Spleen (tissue), 13 donors: ENCODE measurements at regions of chr6 and their contacts with region 1.

Region 1: DNA sequence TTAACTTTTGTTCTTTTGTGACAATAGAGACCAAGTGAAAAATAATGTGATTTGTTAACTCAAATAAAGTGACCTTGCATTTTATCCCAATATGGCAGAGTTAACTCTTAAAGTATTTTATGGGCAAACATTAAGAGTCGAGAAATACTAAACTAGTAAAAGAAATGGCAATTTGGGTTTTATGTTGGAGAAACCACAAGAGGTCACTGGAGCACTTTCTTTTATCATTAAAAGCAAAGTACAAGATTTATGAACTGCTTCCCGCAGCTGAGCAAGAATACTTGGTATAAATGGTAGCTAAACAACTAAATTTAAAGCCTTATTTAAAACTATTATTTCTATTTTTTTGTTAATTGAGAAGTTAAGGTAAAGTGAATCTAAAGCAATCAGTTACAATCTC is 33.5 kb upstream of the MCM9 start:
- DNase-seq: no peak
- H3K4me3 ChIP-seq: no peak overlapping the region
- H3K27ac ChIP-seq: no peak overlapping the region
- H3K4me1 ChIP-seq: no peaks in the 10 kb centered on the region
- H3K27me3 ChIP-seq: no peaks in the 10 kb centered on the region
- CTCF ChIP-seq: no peak
- POLR2A ChIP-seq: no peak

Region 2: GRCh38 chr6:118764766-118765165 is 203.7 kb before region 1 on chr6:
- intact Hi-C with region 1: no loop called
- DNase-seq: no peak
- H3K4me3 ChIP-seq: no peak overlapping the region
- H3K27ac ChIP-seq: peak overlapping the region in 6 of 8 donors; percentile 26 to 77 (median 56)
- H3K4me1 ChIP-seq: peaks cover 0 to 35% (median 18%) of the 10 kb centered on the region in 6 donors
- H3K27me3 ChIP-seq: no peaks in the 10 kb centered on the region
- CTCF ChIP-seq: no peak
- POLR2A ChIP-seq: no peak

Region 3: GRCh38 chr6:119105282-119105681 is 136.9 kb after region 1 on chr6:
- intact Hi-C with region 1: loop called (anchors 5 kb)
- DNase-seq: no peak
- H3K4me3 ChIP-seq: no peak overlapping the region
- H3K27ac ChIP-seq: no peak overlapping the region
- H3K4me1 ChIP-seq: peaks cover 0 to under 1% (median 0%) of the 10 kb centered on the region in 6 donors
- H3K27me3 ChIP-seq: no peaks in the 10 kb centered on the region
- CTCF ChIP-seq: no peak
- POLR2A ChIP-seq: no peak

Region 4: DNA sequence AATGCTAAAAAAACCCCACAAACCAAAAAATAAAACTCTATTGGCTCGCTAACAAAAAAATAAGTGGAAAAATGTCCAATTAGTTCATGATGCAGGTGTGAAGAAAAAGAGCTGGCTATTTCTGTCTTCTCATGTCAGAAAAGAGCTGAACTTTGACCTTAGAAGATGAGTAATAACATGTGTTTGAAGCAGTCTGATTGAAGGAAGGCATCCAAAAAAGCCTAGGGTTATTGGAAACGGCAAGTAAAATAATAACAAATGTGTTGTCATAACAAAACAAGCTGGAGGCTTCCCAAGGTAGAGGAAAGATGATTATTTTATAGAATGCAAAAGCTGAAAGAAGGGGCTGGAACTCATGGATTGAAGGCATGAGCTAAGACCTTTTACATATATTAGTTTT is 204.4 kb after region 1 on chr6:
- intact Hi-C with region 1: no loop called
- DNase-seq: no peak
- H3K4me3 ChIP-seq: no peak overlapping the region
- H3K27ac ChIP-seq: no peak overlapping the region
- H3K4me1 ChIP-seq: no peaks in the 10 kb centered on the region
- H3K27me3 ChIP-seq: no peaks in the 10 kb centered on the region
- CTCF ChIP-seq: no peak
- POLR2A ChIP-seq: no peak